ENCODE measurements at regions of chr6 and their contacts with region 1.

Region 1: GRCh38 chr6:9532571-9533557 is 882.0 kb downstream of the TFAP2A start:
- DNase-seq: no peak
- ATAC-seq: peak; percentile 72
- H3K4me3 ChIP-seq: no peak overlapping the region
- H3K27ac ChIP-seq: peak overlapping the region; percentile 57
- H3K4me1 ChIP-seq: no peaks in the 10 kb centered on the region
- H3K27me3 ChIP-seq: no peaks in the 10 kb centered on the region
- CTCF ChIP-seq: no peak

Region 2: DNA sequence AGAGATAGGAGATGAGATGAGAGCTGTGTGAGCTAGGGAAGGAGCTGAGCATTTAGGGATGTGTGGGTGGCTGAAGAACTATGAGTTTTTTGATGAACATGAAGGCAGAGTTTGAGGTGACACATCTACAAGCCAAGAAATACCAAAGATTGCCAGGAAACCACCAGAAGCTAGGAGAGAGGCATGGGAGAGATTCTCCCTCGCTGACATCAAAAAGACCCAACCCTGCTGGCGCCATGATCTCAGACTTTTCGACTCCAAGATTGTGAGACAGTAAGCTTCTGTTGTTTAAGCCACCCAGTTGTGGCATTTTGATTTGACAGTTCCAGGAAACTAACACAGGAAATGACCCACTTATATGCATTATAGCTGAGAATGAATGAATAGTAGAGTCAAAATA is 91.1 kb after region 1 on chr6:
- CTCF ChIA-PET with region 1: no interaction called
- POLR2A ChIA-PET with region 1: interaction called, 12 read pairs
- in situ Hi-C with region 1: no loop called
- intact Hi-C with region 1: no loop called
- DNase-seq: no peak
- ATAC-seq: no peak
- H3K4me3 ChIP-seq: no peak overlapping the region
- H3K27ac ChIP-seq: no peak overlapping the region
- H3K4me1 ChIP-seq: no peaks in the 10 kb centered on the region
- H3K27me3 ChIP-seq: no peaks in the 10 kb centered on the region
- CTCF ChIP-seq: no peak

Region 3: GRCh38 chr6:10316327-10316726 is 783.5 kb after region 1 on chr6:
- CTCF ChIA-PET with region 1: no interaction called
- POLR2A ChIA-PET with region 1: no interaction called
- in situ Hi-C with region 1: no loop called
- intact Hi-C with region 1: no loop called
- DNase-seq: no peak
- ATAC-seq: peak; percentile 98
- H3K4me3 ChIP-seq: peak overlapping the region in 1 of 2 experiments; percentile 27; a peak in 1 of 4 replicates
- H3K27ac ChIP-seq: peak overlapping the region; percentile 83
- H3K4me1 ChIP-seq: peaks cover 34% of the 10 kb centered on the region
- H3K27me3 ChIP-seq: no peaks in the 10 kb centered on the region
- CTCF ChIP-seq: no peak